SK-N-SH (cell line): ENCODE measurements at regions of chr11 and their contacts with region 1.

Region 1: DNA sequence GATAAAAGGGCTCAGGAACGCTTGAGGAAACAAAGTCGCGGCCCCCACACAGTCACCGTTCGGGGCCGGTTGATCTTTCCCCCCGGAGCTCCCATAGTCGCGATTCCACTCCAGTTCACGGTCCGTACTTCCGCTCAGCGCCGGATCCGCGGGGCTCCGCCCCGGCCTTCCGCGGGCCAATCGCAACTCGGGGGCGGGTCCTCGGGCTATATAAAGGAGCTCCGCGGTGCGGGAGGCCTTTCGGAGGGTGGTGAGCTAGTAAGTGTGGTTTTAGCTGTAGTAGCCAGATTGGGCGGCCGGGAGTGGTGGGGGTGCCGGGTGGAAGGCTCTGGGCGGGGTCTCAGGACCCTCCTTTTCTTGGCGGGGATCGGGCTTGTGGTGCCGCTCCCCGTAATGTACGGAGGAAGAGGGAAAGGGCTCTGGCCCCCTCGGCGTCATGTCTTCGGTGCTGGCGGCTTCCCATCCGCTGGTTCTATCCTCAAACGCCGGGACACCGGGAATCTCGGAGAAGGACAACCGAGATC is at the starts of genes C11orf98 and CSKMT:
- DNase-seq: peak; percentile 97
- H3K4me3 ChIP-seq: peak within 1 kb of the TSS; percentile 78 to 95
- H3K27ac ChIP-seq: peak within 1 kb of the TSS; percentile 91 to 92
- H3K4me1 ChIP-seq: peaks cover 16 to 21% of the 10 kb centered on the region in 2 experiments; a peak in 3 of 4 replicates
- H3K27me3 ChIP-seq: no peaks in the 10 kb centered on the region
- CTCF ChIP-seq: no peak
- EP300 ChIP-seq: 0 out of 4 replicates have a peak, but pooled peaks of 1 of the 2 experiments have one; percentile 31
- RAD21 ChIP-seq: no peak
- polyA plus RNA-seq, gene C11orf98: 90.1 and 126 TPM in 2 replicates
- polyA plus RNA-seq, gene CSKMT: 9.5 and 11.1 TPM in 2 replicates

Region 2: GRCh38 chr11:62104816-62105653 is 560.1 kb before region 1 on chr11:
- CTCF ChIA-PET with region 1: no interaction called
- POLR2A ChIA-PET with region 1: no interaction called
- DNase-seq: no peak
- H3K4me3 ChIP-seq: no peak overlapping the region
- H3K27ac ChIP-seq: no peak overlapping the region
- H3K4me1 ChIP-seq: peaks cover 0 to 3% of the 10 kb centered on the region in 2 experiments; a peak in 1 of 4 replicates
- H3K27me3 ChIP-seq: no peaks in the 10 kb centered on the region
- CTCF ChIP-seq: no peak
- EP300 ChIP-seq: no peak
- RAD21 ChIP-seq: no peak

Region 3: GRCh38 chr11:62601394-62602140 is 63.6 kb before region 1 on chr11 and contains the start of gene MTA2:
- CTCF ChIA-PET with region 1: no interaction called
- POLR2A ChIA-PET with region 1: interaction called, 18 read pairs
- DNase-seq: peak; percentile 97
- H3K4me3 ChIP-seq: peak within 1 kb of the TSS; percentile 70 to 96
- H3K27ac ChIP-seq: peak within 1 kb of the TSS; percentile 87 to 93
- H3K4me1 ChIP-seq: peaks cover 12 to 23% of the 10 kb centered on the region in 2 experiments; a peak in 3 of 4 replicates
- H3K27me3 ChIP-seq: no peaks in the 10 kb centered on the region
- CTCF ChIP-seq: no peak
- EP300 ChIP-seq: no peak
- RAD21 ChIP-seq: no peak
- polyA plus RNA-seq, gene MTA2: 18.4 and 20.6 TPM in 2 replicates

Region 4: GRCh38 chr11:62645956-62646824 is 18.9 kb before region 1 on chr11 and contains the start of gene GANAB:
- CTCF ChIA-PET with region 1: interaction called, 4 read pairs
- POLR2A ChIA-PET with region 1: interaction called, 52 read pairs
- DNase-seq: peak; percentile 99
- H3K4me3 ChIP-seq: peak within 1 kb of the TSS; percentile 78 to 87
- H3K27ac ChIP-seq: peak within 1 kb of the TSS; percentile 77 to 88
- H3K4me1 ChIP-seq: peaks cover 5 to 8% of the 10 kb centered on the region in 2 experiments; a peak in 2 of 4 replicates
- H3K27me3 ChIP-seq: no peaks in the 10 kb centered on the region
- CTCF ChIP-seq: no peak
- EP300 ChIP-seq: no peak; a peak in 1 of 4 replicates
- RAD21 ChIP-seq: no peak
- polyA plus RNA-seq, gene GANAB: 275 and 332 TPM in 2 replicates

Region 5: GRCh38 chr11:62689421-62690183 is 24.5 kb after region 1 on chr11 and contains the start of gene LRRN4CL:
- CTCF ChIA-PET with region 1: interaction called, 8 read pairs
- POLR2A ChIA-PET with region 1: interaction called, 12 read pairs
- DNase-seq: peak; percentile 27
- H3K4me3 ChIP-seq: no peak within 1 kb of the TSS
- H3K27ac ChIP-seq: no peak within 1 kb of the TSS
- H3K4me1 ChIP-seq: peaks cover 0 to 9% of the 10 kb centered on the region in 2 experiments; a peak in 3 of 4 replicates
- H3K27me3 ChIP-seq: no peaks in the 10 kb centered on the region
- CTCF ChIP-seq: no peak
- EP300 ChIP-seq: no peak
- RAD21 ChIP-seq: no peak
- polyA plus RNA-seq, gene LRRN4CL: 0.08 and 0.10 TPM in 2 replicates

Region 6: GRCh38 chr11:62753736-62754603 is 88.8 kb after region 1 on chr11 and contains the start of gene ZBTB3:
- CTCF ChIA-PET with region 1: no interaction called
- POLR2A ChIA-PET with region 1: interaction called, 12 read pairs
- DNase-seq: peak; percentile 90
- H3K4me3 ChIP-seq: peak within 1 kb of the TSS; percentile 66 to 69
- H3K27ac ChIP-seq: peak within 1 kb of the TSS; percentile 85 to 95
- H3K4me1 ChIP-seq: peaks cover 6 to 11% of the 10 kb centered on the region in 2 experiments; a peak in 3 of 4 replicates
- H3K27me3 ChIP-seq: no peaks in the 10 kb centered on the region
- CTCF ChIP-seq: no peak
- EP300 ChIP-seq: no peak
- RAD21 ChIP-seq: no peak
- polyA plus RNA-seq, gene ZBTB3: 2.1 and 3.3 TPM in 2 replicates

Region 7: DNA sequence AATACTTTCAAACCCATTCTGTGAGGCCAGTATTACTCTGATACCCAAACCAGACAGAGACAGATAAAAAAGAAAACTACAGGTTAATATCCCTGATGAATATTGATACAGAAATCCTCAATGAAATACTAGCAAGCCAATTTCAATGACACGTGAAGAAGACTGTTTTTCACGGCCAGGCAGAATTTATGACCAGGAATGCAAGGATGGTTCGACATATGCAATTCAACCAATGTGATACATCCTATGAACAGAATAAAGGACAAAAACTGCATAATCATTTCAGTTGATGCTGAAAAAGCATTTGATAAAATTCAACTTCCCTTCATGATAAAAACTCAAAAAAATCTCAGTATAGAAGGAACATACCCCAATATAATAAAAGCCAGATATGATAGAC is 434.4 kb after region 1 on chr11:
- CTCF ChIA-PET with region 1: no interaction called
- POLR2A ChIA-PET with region 1: no interaction called
- DNase-seq: no peak
- H3K4me3 ChIP-seq: no peak overlapping the region
- H3K27ac ChIP-seq: no peak overlapping the region
- H3K4me1 ChIP-seq: no peaks in the 10 kb centered on the region
- H3K27me3 ChIP-seq: no peaks in the 10 kb centered on the region
- CTCF ChIP-seq: no peak
- EP300 ChIP-seq: no peak
- RAD21 ChIP-seq: no peak